ENCODE measurements at regions of chr2 and their contacts with region 1.

Region 1: DNA sequence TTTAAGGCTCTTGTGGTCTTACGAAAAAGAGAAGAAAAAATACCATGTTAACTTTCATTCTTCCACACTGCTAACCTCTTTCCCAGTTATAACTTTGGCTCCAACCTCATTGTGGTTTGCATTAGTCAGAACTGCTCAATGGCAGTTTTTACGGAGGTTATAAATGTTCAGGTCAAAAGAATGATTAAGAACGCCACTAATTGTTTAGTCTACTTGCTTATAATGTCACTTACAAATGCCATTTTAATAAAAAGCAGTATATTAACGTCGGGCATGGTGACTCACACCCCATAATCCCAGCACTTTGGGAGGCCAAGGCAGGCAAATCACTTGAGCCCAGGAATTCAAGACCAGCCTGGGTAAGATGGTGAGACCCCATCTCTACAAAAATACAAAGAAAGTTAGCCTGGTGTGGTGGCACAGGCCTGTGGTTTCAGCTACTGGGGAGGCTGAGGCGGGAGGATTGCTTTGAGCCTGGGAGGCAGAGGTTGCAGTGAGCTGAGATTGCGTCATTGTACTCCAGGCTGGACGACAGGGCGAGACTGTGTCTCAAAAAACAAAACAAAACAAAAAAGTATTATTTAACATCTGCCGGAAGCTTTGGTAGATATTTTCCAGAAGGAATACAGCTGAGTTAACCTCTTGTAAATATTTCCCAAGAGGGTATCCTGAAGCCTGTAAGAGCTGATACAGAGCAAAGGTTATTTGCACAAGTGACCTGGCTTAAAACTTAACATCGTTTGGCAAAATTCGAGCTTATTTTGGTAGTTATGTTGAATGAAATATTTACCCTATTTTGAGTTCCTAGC is 5.1 kb downstream of the AGPS start:
- DNase-seq: peak; percentile 38 to 80
- H3K4me3 ChIP-seq: no peak overlapping the region
- H3K27ac ChIP-seq: peak overlapping the region; percentile 67
- H3K4me1 ChIP-seq: peaks cover 56% of the 10 kb centered on the region
- H3K27me3 ChIP-seq: no peaks in the 10 kb centered on the region
- CTCF ChIP-seq: no peak

Region 2: GRCh38 chr2:177281400-177282180 is 116.1 kb before region 1 on chr2:
- CTCF ChIA-PET with region 1: no interaction called
- POLR2A ChIA-PET with region 1: no interaction called
- intact Hi-C with region 1: no loop called
- DNase-seq: no peak
- H3K4me3 ChIP-seq: no peak overlapping the region
- H3K27ac ChIP-seq: no peak overlapping the region
- H3K4me1 ChIP-seq: 0 out of 2 replicates have a peak, but pooled peaks cover 10% of the 10 kb centered on the region
- H3K27me3 ChIP-seq: no peaks in the 10 kb centered on the region
- CTCF ChIP-seq: no peak

Region 3: DNA sequence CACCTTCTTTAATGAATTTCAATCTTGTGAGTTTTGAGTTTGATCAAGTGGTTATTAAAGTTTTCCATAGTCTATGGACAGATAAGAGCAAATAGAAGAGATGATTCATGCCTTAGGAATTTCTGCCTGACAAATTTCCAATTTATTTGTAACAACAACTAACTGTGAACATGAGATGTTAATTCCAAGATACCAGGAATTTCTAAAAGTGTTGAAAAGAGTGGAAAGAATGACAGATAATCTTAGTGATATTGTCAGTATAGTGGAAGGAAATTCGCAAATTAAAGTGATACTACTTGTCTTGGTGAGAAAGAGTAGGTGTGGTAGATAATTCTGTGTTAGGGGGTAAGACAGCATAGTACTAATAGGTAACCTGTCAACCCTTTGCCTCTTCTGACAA is 77.3 kb after region 1 on chr2:
- CTCF ChIA-PET with region 1: no interaction called
- POLR2A ChIA-PET with region 1: no interaction called
- intact Hi-C with region 1: loop called (anchors 2 kb)
- DNase-seq: no peak
- H3K4me3 ChIP-seq: no peak overlapping the region
- H3K27ac ChIP-seq: no peak overlapping the region
- H3K4me1 ChIP-seq: 0 out of 2 replicates have a peak, but pooled peaks cover 5% of the 10 kb centered on the region
- H3K27me3 ChIP-seq: no peaks in the 10 kb centered on the region
- CTCF ChIP-seq: no peak